CD8-positive, alpha-beta memory T cell (primary cell): ENCODE measurements at regions of chr7 and their contacts with region 1.

Region 1: DNA sequence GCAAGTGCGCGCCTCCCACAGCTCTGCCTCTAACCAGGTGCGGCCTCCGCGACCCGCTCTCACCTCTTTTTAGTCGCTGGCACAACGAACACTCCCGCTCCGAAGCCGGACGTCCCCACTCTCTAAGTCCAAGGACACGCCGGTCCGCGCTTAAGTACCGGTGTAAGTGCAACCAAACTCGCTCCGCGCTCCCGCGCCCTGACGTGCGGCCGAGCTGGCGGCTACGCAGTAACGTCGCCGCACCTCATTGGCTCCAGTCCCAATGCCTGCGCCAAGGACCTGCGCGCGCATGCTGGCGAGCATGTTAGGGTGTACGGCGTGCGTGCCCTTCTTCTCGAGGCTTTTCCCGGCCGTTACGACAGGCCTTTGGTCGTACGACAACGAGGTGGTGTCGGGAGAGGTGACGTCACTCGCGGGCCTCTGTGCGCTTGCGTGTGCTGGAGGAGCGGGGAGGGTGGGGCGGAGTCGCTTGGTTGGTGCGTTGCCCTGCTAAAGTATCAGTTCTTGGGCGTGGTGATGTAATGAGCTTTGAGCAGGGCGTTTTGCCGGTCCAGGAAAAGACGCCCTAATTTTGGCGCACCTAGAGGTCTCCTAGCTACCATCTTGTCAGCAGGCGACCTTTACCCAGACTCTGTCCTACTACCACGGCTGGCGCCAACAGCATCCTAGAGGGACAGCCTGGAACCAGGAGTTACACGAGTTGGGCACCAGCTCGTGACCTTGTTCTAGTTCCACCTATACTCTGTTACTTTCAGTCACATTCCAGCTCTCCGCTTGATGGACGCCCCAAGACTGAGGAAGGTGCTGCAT is at the start of gene CYCS:
- DNase-seq: peak; percentile 99 to 100 (median 99)
- H3K4me3 ChIP-seq: peak within 1 kb of the TSS; percentile 88
- H3K4me3 Mint-ChIP-seq: peak within 1 kb of the TSS; percentile 96 to 100 (median 99)
- H3K27ac ChIP-seq: peak within 1 kb of the TSS; percentile 96
- H3K27ac Mint-ChIP-seq: peak within 1 kb of the TSS; percentile 96 to 100 (median 99)
- H3K4me1 ChIP-seq: peaks cover 13% of the 10 kb centered on the region
- H3K4me1 Mint-ChIP-seq: peaks cover 30 to 33% (median 30%) of the 10 kb centered on the region in 3 donors
- H3K27me3 ChIP-seq: no peaks in the 10 kb centered on the region
- H3K27me3 Mint-ChIP-seq: peaks cover 0 to 4% of the 10 kb centered on the region in 2 donors
- total RNA-seq, gene CYCS: 294 to 324 TPM

Region 2: DNA sequence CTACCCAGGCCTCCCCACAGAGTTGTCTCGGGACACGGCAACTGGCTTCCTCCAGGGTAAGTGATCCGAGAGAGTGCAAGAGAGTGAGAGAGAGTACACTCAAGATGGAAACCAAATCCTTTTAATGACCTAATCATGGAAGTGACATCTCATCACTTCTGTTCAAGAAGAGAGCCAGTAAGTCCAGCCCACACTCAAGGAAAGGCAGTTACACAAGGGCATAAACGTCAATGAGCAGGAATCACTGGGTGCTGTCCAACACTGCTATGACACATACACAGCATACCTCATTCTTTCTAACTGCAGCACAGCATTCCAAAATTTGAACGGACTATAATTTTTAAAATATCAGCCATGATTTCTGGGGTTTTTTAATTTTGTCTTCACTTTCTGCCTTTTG is 116.1 kb before region 1 on chr7:
- CTCF ChIA-PET with region 1: no interaction called
- POLR2A ChIA-PET with region 1: no interaction called
- DNase-seq: no peak
- H3K4me3 ChIP-seq: no peak overlapping the region
- H3K4me3 Mint-ChIP-seq: no peak overlapping the region
- H3K27ac ChIP-seq: no peak overlapping the region
- H3K27ac Mint-ChIP-seq: no peak overlapping the region
- H3K4me1 ChIP-seq: no peaks in the 10 kb centered on the region
- H3K4me1 Mint-ChIP-seq: no peaks in the 10 kb centered on the region
- H3K27me3 ChIP-seq: no peaks in the 10 kb centered on the region
- H3K27me3 Mint-ChIP-seq: peaks cover 2 to 11% of the 10 kb centered on the region in 2 donors

Region 3: GRCh38 chr7:25093268-25093826 is 32.0 kb before region 1 on chr7:
- CTCF ChIA-PET with region 1: interaction called, 24 read pairs
- POLR2A ChIA-PET with region 1: interaction called, 7 read pairs
- DNase-seq: peak; percentile 57 to 78 (median 62)
- H3K4me3 ChIP-seq: no peak overlapping the region
- H3K4me3 Mint-ChIP-seq: no peak overlapping the region
- H3K27ac ChIP-seq: no peak overlapping the region
- H3K27ac Mint-ChIP-seq: no peak overlapping the region
- H3K4me1 ChIP-seq: no peaks in the 10 kb centered on the region
- H3K4me1 Mint-ChIP-seq: peaks cover 6 to 11% (median 8%) of the 10 kb centered on the region in 3 donors
- H3K27me3 ChIP-seq: no peaks in the 10 kb centered on the region
- H3K27me3 Mint-ChIP-seq: peaks cover 1 to 2% of the 10 kb centered on the region in 2 donors

Region 4: GRCh38 chr7:25098096-25099046 is 27.0 kb before region 1 on chr7:
- CTCF ChIA-PET with region 1: interaction called, 24 read pairs
- POLR2A ChIA-PET with region 1: interaction called, 7 read pairs
- DNase-seq: peak; percentile 39 to 73 (median 42)
- H3K4me3 ChIP-seq: no peak overlapping the region
- H3K4me3 Mint-ChIP-seq: no peak overlapping the region
- H3K27ac ChIP-seq: no peak overlapping the region
- H3K27ac Mint-ChIP-seq: no peak overlapping the region
- H3K4me1 ChIP-seq: no peaks in the 10 kb centered on the region
- H3K4me1 Mint-ChIP-seq: peaks cover 4 to 8% (median 6%) of the 10 kb centered on the region in 3 donors
- H3K27me3 ChIP-seq: peaks cover 3% of the 10 kb centered on the region
- H3K27me3 Mint-ChIP-seq: peaks cover 1 to 4% of the 10 kb centered on the region in 2 donors

Region 5: GRCh38 chr7:25179771-25180591 is 54.6 kb after region 1 on chr7:
- CTCF ChIA-PET with region 1: interaction called, 5 read pairs
- POLR2A ChIA-PET with region 1: interaction called, 12 read pairs
- DNase-seq: peak; percentile 90 to 96 (median 95)
- H3K4me3 ChIP-seq: peak overlapping the region; percentile 74
- H3K4me3 Mint-ChIP-seq: peak overlapping the region; percentile 85 to 96 (median 91)
- H3K27ac ChIP-seq: peak overlapping the region; percentile 57
- H3K27ac Mint-ChIP-seq: peak overlapping the region; percentile 74 to 98 (median 90)
- H3K4me1 ChIP-seq: peaks cover 16% of the 10 kb centered on the region
- H3K4me1 Mint-ChIP-seq: peaks cover 17 to 30% (median 24%) of the 10 kb centered on the region in 3 donors
- H3K27me3 ChIP-seq: no peaks in the 10 kb centered on the region
- H3K27me3 Mint-ChIP-seq: peaks cover 3 to 5% of the 10 kb centered on the region in 2 donors